Common myeloid progenitor, CD34-positive (primary cell): ENCODE measurements at regions of chr2 and their contacts with region 1.

Region 1: DNA sequence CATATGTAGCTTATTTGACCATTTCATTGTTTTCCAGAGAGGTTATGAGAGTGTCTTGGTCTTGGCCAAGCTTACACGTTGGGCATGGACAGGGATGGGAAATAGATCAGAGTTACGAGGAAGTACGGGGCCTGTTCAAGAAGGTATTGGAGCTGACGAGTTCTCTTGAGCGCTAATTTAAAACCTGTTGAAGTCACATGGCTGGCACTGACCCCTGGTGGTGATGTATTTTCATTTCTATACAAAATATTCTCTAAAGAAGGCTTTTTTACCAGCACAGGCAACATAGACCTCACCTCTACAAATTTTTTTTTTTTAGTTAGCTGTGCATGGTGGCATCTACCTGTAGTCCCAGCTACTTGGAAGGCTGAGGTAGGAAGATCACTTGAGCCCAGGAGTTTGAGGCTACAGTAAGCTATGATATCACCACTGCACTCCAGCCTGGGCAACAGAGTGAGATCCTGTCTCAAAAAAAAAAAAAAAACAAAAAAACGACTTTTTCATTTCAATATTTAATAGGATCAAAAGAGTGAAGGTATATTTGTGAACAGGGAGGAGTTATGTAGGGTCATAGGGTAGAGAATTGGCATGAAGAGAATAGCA is 19.6 kb downstream of the UGP2 start:
- DNase-seq: peak; percentile 86 to 93 (median 89)
- H3K4me3 ChIP-seq: no peak overlapping the region
- H3K27ac ChIP-seq: no peak overlapping the region
- H3K4me1 ChIP-seq: peaks cover 5 to 12% (median 6%) of the 10 kb centered on the region in 4 experiments
- H3K27me3 ChIP-seq: no peaks in the 10 kb centered on the region

Region 2: DNA sequence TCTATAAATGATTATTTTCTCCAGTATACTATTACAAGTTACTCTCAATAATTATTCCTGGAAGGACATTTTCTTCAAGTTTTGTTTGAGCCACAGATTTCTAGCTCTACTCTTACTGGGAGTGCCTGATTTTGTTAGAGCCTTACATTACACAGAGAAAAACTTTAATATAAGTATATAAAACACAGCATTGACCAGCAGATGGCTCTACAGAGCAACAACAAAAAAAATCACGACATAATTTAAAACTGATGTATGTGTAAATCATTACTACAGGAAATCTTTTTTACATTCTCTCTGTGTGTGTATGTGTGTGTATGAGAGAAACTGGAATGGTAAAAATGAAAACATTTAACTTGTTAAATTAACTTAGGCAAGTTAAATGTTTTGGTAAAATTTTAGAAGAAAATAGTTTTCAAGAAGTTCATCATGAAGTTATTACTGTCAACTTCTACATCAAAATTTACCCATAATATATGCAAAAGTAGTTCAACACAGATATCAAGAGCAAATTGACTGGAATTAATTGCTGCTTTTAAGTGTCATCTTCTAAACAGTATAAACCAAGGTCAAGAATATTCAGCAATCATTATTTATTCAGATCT is 169.2 kb before region 1 on chr2:
- CTCF ChIA-PET with region 1: interaction called, 106 read pairs
- POLR2A ChIA-PET with region 1: interaction called, 3 read pairs
- DNase-seq: peak; percentile 52 to 74 (median 69)
- H3K4me3 ChIP-seq: no peak overlapping the region
- H3K27ac ChIP-seq: no peak overlapping the region
- H3K4me1 ChIP-seq: no peaks in the 10 kb centered on the region
- H3K27me3 ChIP-seq: no peaks in the 10 kb centered on the region

Region 3: GRCh38 chr2:63698825-63699548 is 162.3 kb before region 1 on chr2:
- CTCF ChIA-PET with region 1: interaction called, 106 read pairs
- POLR2A ChIA-PET with region 1: interaction called, 3 read pairs
- DNase-seq: peak; percentile 26 to 51 (median 41)
- H3K4me3 ChIP-seq: no peak overlapping the region
- H3K27ac ChIP-seq: no peak overlapping the region
- H3K4me1 ChIP-seq: no peaks in the 10 kb centered on the region
- H3K27me3 ChIP-seq: no peaks in the 10 kb centered on the region

Region 4: GRCh38 chr2:63801455-63801854 is 59.9 kb before region 1 on chr2:
- CTCF ChIA-PET with region 1: no interaction called
- POLR2A ChIA-PET with region 1: no interaction called
- DNase-seq: no peak
- H3K4me3 ChIP-seq: no peak overlapping the region
- H3K27ac ChIP-seq: no peak overlapping the region
- H3K4me1 ChIP-seq: no peaks in the 10 kb centered on the region
- H3K27me3 ChIP-seq: no peaks in the 10 kb centered on the region

Region 5: GRCh38 chr2:63841254-63842022 is 19.9 kb before region 1 on chr2 and contains the start of gene UGP2:
- CTCF ChIA-PET with region 1: interaction called, 103 read pairs
- POLR2A ChIA-PET with region 1: interaction called, 43 read pairs
- DNase-seq: peak; percentile 92 to 98 (median 96)
- H3K4me3 ChIP-seq: peak within 1 kb of the TSS; percentile 76 to 97 (median 96)
- H3K27ac ChIP-seq: peak within 1 kb of the TSS; percentile 79 to 93
- H3K4me1 ChIP-seq: peaks cover 26 to 46% (median 27%) of the 10 kb centered on the region in 4 experiments
- H3K27me3 ChIP-seq: no peaks in the 10 kb centered on the region

Region 6: DNA sequence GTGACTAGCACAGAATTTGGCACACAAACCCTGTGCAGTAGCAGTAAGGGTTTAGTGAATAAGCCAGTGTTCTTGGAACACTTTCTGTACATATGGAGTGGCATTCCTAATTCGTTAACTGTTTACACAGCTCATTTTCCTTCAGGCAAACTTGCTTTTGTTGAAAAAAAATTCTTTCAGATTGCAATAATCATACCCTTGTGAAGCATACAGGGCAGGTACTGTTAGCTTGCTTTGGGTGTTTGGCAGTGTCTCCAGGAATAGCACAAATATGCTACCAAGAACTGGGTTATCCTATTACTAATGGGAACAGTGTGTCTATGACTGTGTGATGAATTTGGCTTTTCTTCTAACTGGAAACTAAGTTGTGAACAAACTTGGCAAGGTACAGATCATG is 13.8 kb after region 1 on chr2:
- CTCF ChIA-PET with region 1: interaction called, 16 read pairs
- POLR2A ChIA-PET with region 1: no interaction called
- DNase-seq: no peak
- H3K4me3 ChIP-seq: no peak overlapping the region
- H3K27ac ChIP-seq: no peak overlapping the region
- H3K4me1 ChIP-seq: peaks cover 0 to 6% (median 0%) of the 10 kb centered on the region in 4 experiments
- H3K27me3 ChIP-seq: no peaks in the 10 kb centered on the region

Region 7: GRCh38 chr2:63977904-63978303 is 116.6 kb after region 1 on chr2:
- CTCF ChIA-PET with region 1: no interaction called
- POLR2A ChIA-PET with region 1: no interaction called
- DNase-seq: no peak
- H3K4me3 ChIP-seq: no peak overlapping the region
- H3K27ac ChIP-seq: no peak overlapping the region
- H3K4me1 ChIP-seq: no peaks in the 10 kb centered on the region
- H3K27me3 ChIP-seq: no peaks in the 10 kb centered on the region